BJ (cell line): ENCODE measurements at regions of chr17 and their contacts with region 1.

Region 1: DNA sequence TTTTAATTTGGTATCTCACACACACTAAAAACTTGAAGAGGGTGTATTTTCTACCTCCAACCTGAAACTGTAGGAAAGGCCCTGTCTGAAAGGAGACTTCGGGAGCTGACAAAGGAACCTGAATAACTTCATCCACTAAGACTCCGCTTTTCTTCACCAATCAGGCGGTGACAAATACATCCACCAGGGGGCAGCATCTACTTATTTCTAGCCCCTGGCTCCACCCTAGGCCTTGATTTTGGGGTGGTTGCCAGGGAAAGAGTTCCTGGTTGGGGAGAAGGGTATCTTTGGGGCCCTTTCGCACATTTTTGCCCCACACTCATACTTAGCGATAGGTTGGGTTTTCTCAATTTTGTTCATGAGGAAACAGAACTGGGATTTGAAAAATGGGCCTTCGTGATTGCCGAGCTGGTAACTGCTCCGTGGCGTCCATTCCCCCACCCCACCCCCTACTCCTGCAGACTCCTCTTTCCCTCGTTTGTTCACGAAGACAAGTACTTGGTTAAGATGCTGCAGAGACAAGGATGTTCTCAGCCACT is 4.8 kb upstream of the ARL4D start:
- DNase-seq: no peak
- H3K4me3 ChIP-seq: no peak overlapping the region
- H3K27me3 ChIP-seq: no peaks in the 10 kb centered on the region
- CTCF ChIP-seq: peak; percentile 82

Region 2: DNA sequence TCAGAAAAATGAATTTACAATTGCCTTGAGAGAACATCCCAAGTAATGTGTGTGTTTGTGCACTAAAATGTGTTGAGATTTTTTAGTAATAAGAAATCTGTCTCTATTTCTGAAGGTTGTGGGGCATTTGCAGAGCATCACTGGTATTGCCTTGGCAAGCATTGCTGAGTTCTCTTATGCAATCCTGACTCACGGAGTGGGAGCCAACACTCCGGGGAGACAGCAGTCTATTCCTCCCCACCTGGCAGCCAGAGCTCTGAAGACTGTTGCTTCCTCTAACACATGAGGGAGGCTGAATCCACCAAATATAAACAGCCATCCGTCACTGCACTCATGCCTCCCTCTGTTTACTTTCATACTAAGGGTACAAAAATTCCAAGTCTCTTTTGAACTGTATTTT is 584.8 kb before region 1 on chr17:
- CTCF ChIA-PET with region 1: no interaction called
- POLR2A ChIA-PET with region 1: no interaction called
- DNase-seq: peak; percentile 37
- H3K4me3 ChIP-seq: no peak overlapping the region
- H3K27me3 ChIP-seq: no peaks in the 10 kb centered on the region
- CTCF ChIP-seq: no peak

Region 3: DNA sequence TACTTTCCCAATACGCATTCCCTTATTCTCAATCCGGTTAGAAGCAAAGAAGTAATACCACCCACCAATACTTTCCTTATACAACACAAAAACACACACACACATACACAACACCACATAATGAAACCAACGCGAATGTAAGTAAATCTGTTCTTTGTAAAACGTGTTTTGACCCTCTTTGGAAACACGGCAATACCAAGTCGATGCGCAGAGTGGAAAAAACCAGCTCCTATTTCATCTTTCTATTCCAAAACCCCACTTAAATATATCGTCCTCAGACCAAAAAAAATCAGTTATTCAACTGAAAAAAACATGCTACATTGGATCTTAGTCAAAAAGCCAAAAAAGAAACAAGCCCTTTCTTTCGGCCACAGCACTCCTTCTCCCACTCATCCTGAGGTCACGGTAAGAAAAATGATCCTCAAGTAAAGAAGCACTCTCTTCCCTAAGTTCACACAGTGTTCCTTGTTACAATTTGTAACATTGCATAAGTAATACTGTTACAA is 26.2 kb before region 1 on chr17:
- CTCF ChIA-PET with region 1: interaction called, 22 read pairs
- POLR2A ChIA-PET with region 1: interaction called, 29 read pairs
- DNase-seq: peak; percentile 51
- H3K4me3 ChIP-seq: peak overlapping the region; percentile 38
- H3K27me3 ChIP-seq: no peaks in the 10 kb centered on the region
- CTCF ChIP-seq: no peak

Region 4: GRCh38 chr17:43406676-43407645 is 12.9 kb after region 1 on chr17:
- CTCF ChIA-PET with region 1: interaction called, 19 read pairs
- POLR2A ChIA-PET with region 1: interaction called, 8 read pairs
- DNase-seq: no peak
- H3K4me3 ChIP-seq: no peak overlapping the region
- H3K27me3 ChIP-seq: no peaks in the 10 kb centered on the region
- CTCF ChIP-seq: no peak

Region 5: DNA sequence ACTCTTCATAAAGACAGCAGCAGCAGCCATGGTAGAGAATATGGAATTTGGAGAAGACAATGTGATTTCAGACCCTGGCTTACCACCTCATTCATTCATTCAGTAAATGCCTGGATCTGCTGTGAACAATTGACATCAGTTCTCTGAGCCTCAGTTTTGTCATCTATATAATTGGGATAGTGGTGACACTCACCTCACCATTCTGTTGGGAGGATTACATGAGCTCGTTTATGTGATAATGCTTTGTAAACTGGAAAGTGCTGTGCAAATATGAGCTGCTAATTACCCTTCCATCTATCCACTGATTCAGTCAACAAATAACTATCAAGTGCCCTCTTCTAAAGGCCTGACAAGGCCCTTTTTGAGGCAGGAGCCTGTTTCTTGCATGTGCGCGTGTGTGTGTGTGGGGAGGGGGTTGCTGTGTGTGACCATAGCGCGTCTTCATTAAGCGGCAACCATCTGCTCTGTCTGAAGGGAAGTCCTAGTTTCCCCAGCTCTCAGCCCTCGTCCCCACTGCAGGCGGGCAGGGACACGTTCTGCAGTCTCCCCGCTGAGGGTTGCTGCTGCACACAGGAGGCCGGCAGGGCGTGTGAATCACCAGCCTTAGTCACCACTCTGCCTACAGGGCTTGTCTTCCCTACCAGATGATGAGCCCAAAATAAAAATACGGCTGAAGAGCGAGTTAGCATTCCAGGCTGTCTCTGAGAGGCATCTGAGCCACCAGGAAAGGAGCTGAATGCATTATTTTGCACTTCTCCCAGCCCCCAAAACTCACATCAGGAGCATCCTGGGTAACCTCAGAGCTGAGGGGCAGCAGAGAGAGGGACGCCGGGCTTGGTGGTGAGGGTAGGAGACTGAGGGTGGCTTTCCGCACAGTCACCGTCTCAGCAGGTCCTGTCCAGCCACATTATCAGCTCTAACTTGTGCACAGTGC is 24.7 kb after region 1 on chr17:
- CTCF ChIA-PET with region 1: interaction called, 27 read pairs
- POLR2A ChIA-PET with region 1: interaction called, 7 read pairs
- DNase-seq: peak; percentile 76
- H3K4me3 ChIP-seq: no peak overlapping the region
- H3K27me3 ChIP-seq: no peaks in the 10 kb centered on the region
- CTCF ChIP-seq: no peak; the same call in 1 of the 2 replicates

Region 6: GRCh38 chr17:43428524-43428923 is 34.5 kb after region 1 on chr17:
- CTCF ChIA-PET with region 1: interaction called, 10 read pairs
- POLR2A ChIA-PET with region 1: interaction called, 3 read pairs
- DNase-seq: no peak
- H3K4me3 ChIP-seq: no peak overlapping the region
- H3K27me3 ChIP-seq: peaks cover 3% of the 10 kb centered on the region; the same call in 1 of the 2 replicates
- CTCF ChIP-seq: peak; percentile 30; the same call in 1 of the 2 replicates

Region 7: DNA sequence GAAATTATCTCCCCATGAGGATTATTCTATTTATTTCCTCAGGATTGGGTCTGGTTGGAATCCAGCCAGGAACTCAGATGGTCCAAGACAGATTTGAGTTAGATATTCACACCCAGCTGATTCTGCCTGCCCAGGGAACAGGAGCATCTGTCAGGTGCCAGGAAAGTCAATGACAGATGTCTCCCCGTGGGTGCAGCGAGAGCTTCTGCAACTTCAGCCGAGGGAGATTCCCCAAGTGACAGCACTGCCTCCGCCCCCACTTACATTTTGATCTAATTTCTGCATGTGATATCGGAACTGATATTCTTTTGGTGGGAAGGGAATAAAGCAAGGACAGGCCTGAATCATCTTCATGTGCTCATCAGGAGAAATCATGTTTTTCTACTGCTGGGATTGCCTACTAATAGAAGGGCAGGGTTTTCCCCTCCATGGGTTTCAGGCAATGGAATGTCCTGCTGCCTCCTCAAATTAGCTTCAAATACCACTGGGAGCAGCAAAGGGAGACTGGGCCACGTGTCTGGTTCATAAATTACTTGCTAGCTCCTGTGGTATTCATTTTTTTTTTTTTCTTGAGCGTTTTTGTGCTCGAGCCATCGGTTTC is 74.1 kb after region 1 on chr17:
- CTCF ChIA-PET with region 1: interaction called, 21 read pairs
- POLR2A ChIA-PET with region 1: interaction called, 5 read pairs
- DNase-seq: peak; percentile 93
- H3K4me3 ChIP-seq: no peak overlapping the region
- H3K27me3 ChIP-seq: no peaks in the 10 kb centered on the region; the same call in 1 of the 2 replicates
- CTCF ChIP-seq: no peak

Region 8: GRCh38 chr17:43477832-43478634 is 84.0 kb after region 1 on chr17:
- CTCF ChIA-PET with region 1: interaction called, 395 read pairs
- POLR2A ChIA-PET with region 1: interaction called, 9 read pairs
- DNase-seq: no peak
- H3K4me3 ChIP-seq: no peak overlapping the region
- H3K27me3 ChIP-seq: no peaks in the 10 kb centered on the region
- CTCF ChIP-seq: no peak